AG04449 (cell line): ENCODE measurements at regions of chr4 and their contacts with region 1.

Region 1: GRCh38 chr4:77203380-77204197 is 46.6 kb downstream of the CCNG2 start:
- DNase-seq: peak; percentile 23
- H3K4me3 ChIP-seq: no peak overlapping the region
- CTCF ChIP-seq: peak; percentile 63

Region 2: DNA sequence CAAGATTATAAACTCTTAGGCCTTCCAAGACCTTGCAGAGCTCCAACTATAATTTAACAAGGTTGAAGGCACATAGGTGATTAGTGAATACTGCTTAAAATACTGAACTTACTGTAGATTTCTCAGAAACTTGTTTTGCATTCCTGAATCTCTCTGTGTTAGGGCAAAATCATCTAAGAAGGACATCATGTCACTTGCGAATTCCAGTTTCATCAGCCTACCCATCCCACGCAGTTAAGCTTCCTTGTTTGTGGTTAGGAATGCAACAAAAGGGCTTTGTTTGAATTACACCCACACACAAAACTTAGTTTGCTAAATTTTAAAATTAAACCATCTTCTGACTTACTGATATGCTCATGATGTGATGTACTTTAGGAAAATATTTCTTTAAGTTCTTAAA is 479.7 kb before region 1 on chr4:
- CTCF ChIA-PET with region 1: no interaction called
- POLR2A ChIA-PET with region 1: no interaction called
- DNase-seq: no peak
- H3K4me3 ChIP-seq: no peak overlapping the region
- CTCF ChIP-seq: no peak

Region 3: GRCh38 chr4:77010841-77011354 is 192.7 kb before region 1 on chr4:
- CTCF ChIA-PET with region 1: no interaction called
- POLR2A ChIA-PET with region 1: no interaction called
- DNase-seq: no peak
- H3K4me3 ChIP-seq: no peak overlapping the region
- CTCF ChIP-seq: no peak

Region 4: GRCh38 chr4:77044461-77045150 is 159.0 kb before region 1 on chr4:
- CTCF ChIA-PET with region 1: interaction called, 76 read pairs
- POLR2A ChIA-PET with region 1: no interaction called
- DNase-seq: no peak
- H3K4me3 ChIP-seq: no peak overlapping the region
- CTCF ChIP-seq: peak; percentile 26

Region 5: DNA sequence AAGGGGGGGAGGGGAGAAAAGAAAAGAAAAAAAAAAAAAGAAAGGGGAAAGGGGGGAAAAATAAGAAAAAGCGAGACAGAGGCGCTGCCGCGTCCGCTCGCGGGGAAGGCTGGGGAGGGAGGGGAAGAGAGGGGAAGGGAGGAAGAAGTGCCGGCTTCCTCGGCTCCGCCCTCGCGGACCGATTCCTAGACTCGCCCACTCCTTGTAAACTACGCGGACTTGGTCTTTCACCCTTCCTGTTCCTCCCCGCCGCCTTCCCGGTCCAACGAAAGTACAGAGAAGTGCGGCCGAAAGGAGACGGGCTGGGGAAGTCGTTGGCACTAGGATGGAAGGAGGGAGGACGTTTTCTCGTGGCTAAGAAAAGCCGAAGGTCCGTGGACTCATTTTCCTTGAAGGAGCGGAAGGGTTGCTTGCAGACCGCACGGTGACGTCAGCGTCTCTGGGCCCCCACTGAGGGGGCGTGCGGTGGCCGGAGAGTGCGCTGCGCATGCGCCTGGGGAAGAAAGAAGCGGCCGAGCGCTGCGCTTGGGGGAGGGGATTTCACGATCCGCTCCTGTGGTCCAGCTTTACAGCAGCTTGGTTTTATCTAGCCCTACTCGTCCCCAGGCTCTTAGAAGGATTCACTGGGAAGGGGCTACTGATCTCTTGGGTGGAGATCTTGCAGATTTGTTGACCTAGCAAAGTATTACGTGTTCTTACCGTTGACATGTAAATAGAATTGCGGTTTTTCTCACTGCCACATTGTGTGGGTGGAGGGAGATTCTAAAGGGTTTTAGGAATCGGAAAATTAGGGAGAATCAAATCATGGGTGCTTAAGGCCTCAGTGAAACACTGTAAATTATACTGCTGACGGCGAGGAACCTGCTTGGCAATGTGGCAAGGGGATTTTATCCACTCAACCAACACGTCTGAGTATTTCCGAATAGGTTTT is 127.5 kb before region 1 on chr4 and contains the start of gene CCNI:
- CTCF ChIA-PET with region 1: interaction called, 222 read pairs
- POLR2A ChIA-PET with region 1: interaction called, 3 read pairs
- DNase-seq: peak; percentile 89
- H3K4me3 ChIP-seq: peak within 1 kb of the TSS; percentile 92
- CTCF ChIP-seq: no peak

Region 6: DNA sequence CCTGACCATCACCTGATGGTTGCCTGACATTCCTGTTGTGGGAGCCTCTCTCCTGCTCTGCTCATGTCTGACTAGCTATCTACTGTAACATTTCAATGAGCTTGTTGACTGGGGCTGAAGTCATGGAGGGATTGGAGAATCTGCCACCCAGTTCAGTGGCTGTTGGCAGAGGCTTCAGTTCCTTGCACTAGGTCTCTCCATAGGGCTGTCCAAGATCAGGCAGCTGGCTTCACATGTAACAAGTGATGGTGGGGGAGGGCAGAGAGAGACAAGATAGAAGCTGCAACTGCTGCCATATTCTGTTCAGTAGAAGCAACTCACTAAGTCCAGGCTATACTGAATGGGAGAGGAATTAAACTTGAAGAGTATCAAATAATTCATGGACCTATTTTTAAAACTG is 113.7 kb before region 1 on chr4:
- CTCF ChIA-PET with region 1: interaction called, 222 read pairs
- POLR2A ChIA-PET with region 1: no interaction called
- DNase-seq: no peak
- H3K4me3 ChIP-seq: no peak overlapping the region
- CTCF ChIP-seq: no peak

Region 7: DNA sequence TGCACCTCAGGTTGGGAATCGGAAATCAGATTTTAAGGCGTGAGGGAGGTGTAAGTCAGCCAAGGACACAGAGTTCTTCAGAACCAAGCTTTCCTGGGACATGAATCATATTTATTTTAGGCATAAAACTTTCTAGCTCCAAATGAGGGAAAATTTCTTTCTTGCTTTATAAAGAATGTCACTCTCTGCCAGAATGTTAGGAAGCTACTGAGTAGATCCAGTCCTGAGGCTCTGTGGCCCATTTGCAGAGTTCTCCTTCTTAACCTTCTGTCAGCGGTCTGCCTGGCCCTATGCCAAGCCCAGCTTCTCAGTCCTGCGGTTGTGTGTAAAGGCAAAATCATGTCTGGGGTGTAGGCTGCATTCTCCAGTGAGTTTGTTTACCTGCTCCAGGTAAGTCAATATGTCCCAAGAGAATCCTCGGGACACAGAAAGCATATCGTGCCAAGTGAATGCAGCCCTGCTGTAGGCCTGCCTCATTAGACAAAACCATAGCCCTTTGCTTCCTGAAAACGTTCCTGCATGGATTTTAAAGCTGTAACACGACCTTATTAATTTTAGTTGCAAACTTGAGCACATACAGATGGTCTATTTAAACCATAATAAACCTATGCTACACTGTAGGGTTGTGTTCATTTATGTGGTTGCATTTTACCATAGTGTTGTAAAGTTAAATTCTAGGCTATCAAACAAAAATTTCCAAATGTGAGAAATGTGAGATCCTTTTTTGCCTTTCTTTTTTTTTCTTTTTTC is 98.6 kb before region 1 on chr4:
- CTCF ChIA-PET with region 1: interaction called, 222 read pairs
- POLR2A ChIA-PET with region 1: no interaction called
- DNase-seq: no peak
- H3K4me3 ChIP-seq: no peak overlapping the region
- CTCF ChIP-seq: no peak

Region 8: GRCh38 chr4:77163636-77164035 is 40.0 kb before region 1 on chr4:
- CTCF ChIA-PET with region 1: interaction called, 10 read pairs
- POLR2A ChIA-PET with region 1: no interaction called
- DNase-seq: no peak
- H3K4me3 ChIP-seq: no peak overlapping the region
- CTCF ChIP-seq: no peak